Gastrocnemius medialis (tissue), 4 donors: ENCODE measurements at regions of chr2 and their contacts with region 1.

Region 1: DNA sequence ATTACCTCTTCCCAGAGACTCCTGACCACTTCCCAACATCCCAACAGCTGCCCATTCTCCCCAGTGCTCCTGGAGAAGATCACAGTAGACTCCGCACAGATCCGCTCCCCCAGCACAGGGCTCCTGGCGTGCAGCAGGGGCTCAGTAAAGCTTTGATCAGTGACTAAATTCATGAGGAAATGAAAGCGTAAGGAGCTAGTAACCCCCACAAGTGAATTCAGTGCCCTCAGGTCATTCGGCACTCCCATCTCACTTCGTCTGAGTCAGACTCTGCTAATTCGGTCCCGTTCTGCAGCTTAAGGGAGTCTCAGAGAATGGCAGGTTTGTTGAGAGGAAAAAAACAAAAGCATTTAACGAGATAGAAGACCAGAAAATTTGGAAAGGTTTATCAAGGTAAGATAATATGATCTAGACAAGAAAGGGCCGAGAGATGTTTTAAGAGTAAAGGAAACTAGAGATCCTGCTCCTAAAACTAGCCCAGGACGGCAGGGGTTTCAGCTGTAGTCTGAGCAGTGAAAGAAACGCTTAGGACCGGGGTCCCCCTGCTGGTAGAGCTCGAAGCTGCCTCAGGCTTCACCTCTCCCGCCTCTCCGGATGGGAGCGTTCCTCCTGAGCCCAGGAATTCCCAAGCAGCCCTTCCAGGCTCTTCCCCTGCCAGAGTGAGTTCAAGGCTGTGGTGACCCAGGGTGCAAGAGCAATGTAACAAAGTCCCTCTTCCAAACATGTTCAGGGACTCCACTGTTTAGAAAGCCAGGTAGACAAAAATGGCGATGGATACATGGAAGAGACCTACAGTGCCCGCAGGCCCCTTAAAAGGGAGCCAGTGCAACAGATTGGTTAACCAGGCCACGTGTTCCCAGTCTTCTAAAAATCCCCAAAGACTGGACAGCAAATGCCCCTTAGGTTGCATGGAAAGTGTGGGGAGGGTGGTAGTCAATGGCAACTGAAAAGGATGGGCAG is 127.3 kb downstream of the DNER start:
- DNase-seq: peak; percentile 33 to 53
- ATAC-seq: peak; percentile 87 to 88
- H3K4me3 ChIP-seq: peak overlapping the region in 3 of 4 donors; percentile 18 to 34 (median 20)
- H3K27ac ChIP-seq: no peak overlapping the region
- H3K4me1 ChIP-seq: no peaks in the 10 kb centered on the region
- H3K27me3 ChIP-seq: no peaks in the 10 kb centered on the region
- CTCF ChIP-seq: peak; percentile 44 to 74 (median 71)
- POLR2A ChIP-seq: no peak

Region 2: GRCh38 chr2:228681426-228681825 is 905.6 kb before region 1 on chr2:
- in situ Hi-C with region 1: loop called in 1 of 4 experiments (anchors 25 kb)
- intact Hi-C with region 1: no loop called
- DNase-seq: no peak
- ATAC-seq: no peak
- H3K4me3 ChIP-seq: no peak overlapping the region
- H3K27ac ChIP-seq: no peak overlapping the region
- H3K4me1 ChIP-seq: no peaks in the 10 kb centered on the region
- H3K27me3 ChIP-seq: no peaks in the 10 kb centered on the region
- CTCF ChIP-seq: peak in 2 of 5 experiments; percentile 11 to 17
- POLR2A ChIP-seq: no peak

Region 3: DNA sequence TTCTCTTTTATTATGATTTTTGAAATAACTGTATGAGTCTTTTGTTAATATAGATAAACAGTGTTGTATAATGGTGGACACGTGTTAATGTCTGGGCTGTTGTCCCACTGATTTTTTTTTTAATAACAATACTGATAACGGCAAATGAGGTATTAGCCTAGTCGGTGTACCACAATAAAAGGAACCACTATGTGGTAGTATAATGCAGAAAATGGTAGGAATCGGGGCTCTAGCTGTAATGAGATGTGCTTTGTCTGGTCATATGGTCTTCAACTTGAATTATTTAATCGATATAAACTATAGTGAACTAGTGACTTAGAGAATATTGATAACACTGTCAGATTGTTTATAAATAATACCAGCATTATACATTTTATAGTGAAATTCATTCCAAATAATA is 887.6 kb before region 1 on chr2:
- in situ Hi-C with region 1: loop called in 2 of 4 experiments (anchors 10 to 25 kb)
- intact Hi-C with region 1: no loop called
- DNase-seq: no peak
- ATAC-seq: no peak
- H3K4me3 ChIP-seq: no peak overlapping the region
- H3K27ac ChIP-seq: no peak overlapping the region
- H3K4me1 ChIP-seq: no peaks in the 10 kb centered on the region
- H3K27me3 ChIP-seq: no peaks in the 10 kb centered on the region
- CTCF ChIP-seq: no peak
- POLR2A ChIP-seq: no peak

Region 4: GRCh38 chr2:229133155-229133772 is 453.8 kb before region 1 on chr2:
- in situ Hi-C with region 1: loop called in 1 of 4 experiments (anchors 25 kb)
- intact Hi-C with region 1: no loop called
- DNase-seq: no peak
- ATAC-seq: peak in 1 of 2 donors; percentile 58
- H3K4me3 ChIP-seq: no peak overlapping the region
- H3K27ac ChIP-seq: no peak overlapping the region
- H3K4me1 ChIP-seq: peaks cover 0 to 5% of the 10 kb centered on the region in 2 donors
- H3K27me3 ChIP-seq: no peaks in the 10 kb centered on the region
- CTCF ChIP-seq: peak in 3 of 5 experiments; percentile 12 to 41 (median 12)
- POLR2A ChIP-seq: no peak

Region 5: GRCh38 chr2:229273723-229274338 is 313.2 kb before region 1 on chr2:
- in situ Hi-C with region 1: no loop called
- intact Hi-C with region 1: loop called (anchors 10 kb)
- DNase-seq: peak in 1 of 2 donors; percentile 13
- ATAC-seq: peak; percentile 75 to 81
- H3K4me3 ChIP-seq: peak overlapping the region in 3 of 4 donors; percentile 26 to 42 (median 34)
- H3K27ac ChIP-seq: peak overlapping the region in 1 of 4 donors; percentile 54
- H3K4me1 ChIP-seq: peaks cover 0 to 3% of the 10 kb centered on the region in 2 donors
- H3K27me3 ChIP-seq: no peaks in the 10 kb centered on the region
- CTCF ChIP-seq: peak in 4 of 5 experiments; percentile 18 to 67 (median 48)
- POLR2A ChIP-seq: no peak

Region 6: GRCh38 chr2:229431327-229431954 is 155.6 kb before region 1 on chr2:
- in situ Hi-C with region 1: loop called (anchors 5 to 10 kb)
- intact Hi-C with region 1: loop called (anchors 1 kb)
- DNase-seq: no peak
- ATAC-seq: peak; percentile 61 to 73
- H3K4me3 ChIP-seq: no peak overlapping the region
- H3K27ac ChIP-seq: peak overlapping the region in 1 of 4 donors; percentile 22
- H3K4me1 ChIP-seq: no peaks in the 10 kb centered on the region
- H3K27me3 ChIP-seq: no peaks in the 10 kb centered on the region
- CTCF ChIP-seq: peak in 4 of 5 experiments; percentile 24 to 34 (median 30)
- POLR2A ChIP-seq: no peak